ENCODE measurements at regions of chr14 and their contacts with region 1.

Region 1: GRCh38 chr14:61598980-61599379 is 96.3 kb upstream of the HIF1A start:
- DNase-seq: peak; percentile 81
- H3K4me3 Mint-ChIP-seq: peak overlapping the region; percentile 31
- H3K27ac Mint-ChIP-seq: peak overlapping the region; percentile 79
- H3K4me1 Mint-ChIP-seq: peaks cover 40% of the 10 kb centered on the region
- H3K27me3 Mint-ChIP-seq: no peaks in the 10 kb centered on the region

Region 2: GRCh38 chr14:61178226-61179060 is 420.5 kb before region 1 on chr14:
- intact Hi-C with region 1: no loop called
- DNase-seq: peak; percentile 80
- H3K4me3 Mint-ChIP-seq: peak overlapping the region; percentile 72
- H3K27ac Mint-ChIP-seq: peak overlapping the region; percentile 87
- H3K4me1 Mint-ChIP-seq: peaks cover 42% of the 10 kb centered on the region
- H3K27me3 Mint-ChIP-seq: no peaks in the 10 kb centered on the region

Region 3: GRCh38 chr14:61418746-61419145 is 180.2 kb before region 1 on chr14:
- intact Hi-C with region 1: no loop called
- DNase-seq: no peak
- H3K4me3 Mint-ChIP-seq: no peak overlapping the region
- H3K27ac Mint-ChIP-seq: peak overlapping the region; percentile 17
- H3K4me1 Mint-ChIP-seq: peaks cover 65% of the 10 kb centered on the region
- H3K27me3 Mint-ChIP-seq: no peaks in the 10 kb centered on the region

Region 4: DNA sequence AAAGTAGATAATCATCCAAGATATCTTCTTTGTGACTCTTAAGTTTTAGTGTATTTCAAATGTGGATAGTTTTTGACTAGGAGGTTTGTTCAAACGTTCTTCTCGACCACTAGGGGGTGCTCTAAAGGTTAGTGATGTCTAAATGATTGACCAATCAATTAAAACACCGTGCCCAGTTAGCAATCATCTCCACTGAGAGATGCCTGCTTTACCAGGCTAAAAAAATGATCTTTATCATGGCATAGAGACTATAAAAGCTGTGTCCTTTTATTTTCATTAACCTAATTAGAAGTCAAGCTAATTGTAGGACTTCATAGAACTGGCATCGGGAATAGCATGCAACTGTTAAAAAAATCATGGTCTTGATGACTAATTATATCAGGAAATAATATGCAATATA is 123.7 kb before region 1 on chr14:
- intact Hi-C with region 1: loop called (anchors 1 kb)
- DNase-seq: peak; percentile 79
- H3K4me3 Mint-ChIP-seq: peak overlapping the region; percentile 39
- H3K27ac Mint-ChIP-seq: peak overlapping the region; percentile 87
- H3K4me1 Mint-ChIP-seq: peaks cover 85% of the 10 kb centered on the region
- H3K27me3 Mint-ChIP-seq: no peaks in the 10 kb centered on the region

Region 5: GRCh38 chr14:61525293-61526011 is 73.5 kb before region 1 on chr14:
- intact Hi-C with region 1: loop called (anchors 1 kb)
- DNase-seq: peak; percentile 87
- H3K4me3 Mint-ChIP-seq: peak overlapping the region; percentile 66
- H3K27ac Mint-ChIP-seq: peak overlapping the region; percentile 65
- H3K4me1 Mint-ChIP-seq: peaks cover 77% of the 10 kb centered on the region
- H3K27me3 Mint-ChIP-seq: no peaks in the 10 kb centered on the region

Region 6: GRCh38 chr14:61578745-61579144 is 20.2 kb before region 1 on chr14:
- intact Hi-C with region 1: loop called (anchors 1 kb)
- DNase-seq: no peak
- H3K4me3 Mint-ChIP-seq: peak overlapping the region; percentile 41
- H3K27ac Mint-ChIP-seq: peak overlapping the region; percentile 65
- H3K4me1 Mint-ChIP-seq: peaks cover 30% of the 10 kb centered on the region
- H3K27me3 Mint-ChIP-seq: peaks cover 9% of the 10 kb centered on the region

Region 7: DNA sequence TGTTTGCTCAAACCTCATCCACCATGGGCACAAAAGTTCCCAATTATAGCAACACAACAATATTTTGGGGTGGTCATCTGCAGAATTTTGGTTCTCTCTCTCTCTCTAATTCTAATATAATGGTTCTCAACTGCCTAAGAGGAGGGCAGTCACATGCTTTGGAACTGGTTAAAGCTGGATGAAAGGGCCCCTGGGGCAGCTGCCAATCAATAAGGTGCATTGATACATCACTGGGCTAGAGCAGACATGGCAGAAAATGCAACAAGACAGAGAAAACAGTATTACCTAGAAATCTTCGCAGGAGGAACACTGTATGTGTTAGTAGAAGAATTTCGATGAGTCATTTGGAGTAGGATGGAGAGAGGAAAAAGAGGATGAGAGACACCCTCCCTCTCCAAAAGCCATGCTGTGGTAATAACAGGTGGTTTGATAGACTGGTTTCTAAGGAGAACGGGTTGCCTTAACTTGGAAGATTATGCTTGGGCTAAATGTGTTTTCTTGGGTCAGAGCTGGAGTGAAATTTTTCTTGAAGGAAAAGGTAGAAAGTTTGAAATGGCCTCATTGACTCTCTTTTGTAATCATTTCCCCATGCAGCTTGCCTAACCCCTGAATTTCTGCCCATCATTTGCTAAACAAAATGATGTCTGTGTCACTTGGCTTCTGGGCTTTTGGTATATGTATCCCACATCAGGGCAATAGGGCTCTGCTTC is 29.2 kb after region 1 on chr14:
- intact Hi-C with region 1: no loop called
- DNase-seq: no peak
- H3K4me3 Mint-ChIP-seq: no peak overlapping the region
- H3K27ac Mint-ChIP-seq: no peak overlapping the region
- H3K4me1 Mint-ChIP-seq: peaks cover 10% of the 10 kb centered on the region
- H3K27me3 Mint-ChIP-seq: no peaks in the 10 kb centered on the region

Region 8: DNA sequence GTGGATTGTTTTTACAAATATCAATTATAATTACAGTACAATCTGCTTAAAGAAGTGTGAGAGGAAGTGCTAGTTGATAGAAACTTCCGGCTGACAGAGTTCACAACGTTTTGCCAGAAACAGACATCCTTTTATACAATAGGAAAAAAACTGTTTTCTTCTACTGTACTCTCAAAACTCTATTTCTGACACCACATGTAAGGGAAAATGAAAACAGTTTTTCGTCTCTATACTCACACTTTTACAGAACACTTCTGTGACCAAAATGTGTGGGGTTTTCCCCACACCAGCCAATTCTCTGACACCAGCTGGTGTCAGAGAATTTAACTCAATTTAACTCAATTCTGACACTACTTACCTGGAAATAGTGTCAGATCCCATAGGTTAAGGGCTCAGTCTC is 72.1 kb after region 1 on chr14:
- intact Hi-C with region 1: loop called (anchors 2 kb)
- DNase-seq: peak; percentile 84
- H3K4me3 Mint-ChIP-seq: no peak overlapping the region
- H3K27ac Mint-ChIP-seq: no peak overlapping the region
- H3K4me1 Mint-ChIP-seq: peaks cover 23% of the 10 kb centered on the region
- H3K27me3 Mint-ChIP-seq: no peaks in the 10 kb centered on the region

Measured in activated CD4-positive, alpha-beta T cell treated with anti-CD3 and anti-CD28 coated beads, Interleukin-2, amount 10 ng/mL, durations not matched to agents 24 days and 14 days (primary cell).